ENCODE measurements at regions of chr1 and their contacts with region 1.

Region 1: DNA sequence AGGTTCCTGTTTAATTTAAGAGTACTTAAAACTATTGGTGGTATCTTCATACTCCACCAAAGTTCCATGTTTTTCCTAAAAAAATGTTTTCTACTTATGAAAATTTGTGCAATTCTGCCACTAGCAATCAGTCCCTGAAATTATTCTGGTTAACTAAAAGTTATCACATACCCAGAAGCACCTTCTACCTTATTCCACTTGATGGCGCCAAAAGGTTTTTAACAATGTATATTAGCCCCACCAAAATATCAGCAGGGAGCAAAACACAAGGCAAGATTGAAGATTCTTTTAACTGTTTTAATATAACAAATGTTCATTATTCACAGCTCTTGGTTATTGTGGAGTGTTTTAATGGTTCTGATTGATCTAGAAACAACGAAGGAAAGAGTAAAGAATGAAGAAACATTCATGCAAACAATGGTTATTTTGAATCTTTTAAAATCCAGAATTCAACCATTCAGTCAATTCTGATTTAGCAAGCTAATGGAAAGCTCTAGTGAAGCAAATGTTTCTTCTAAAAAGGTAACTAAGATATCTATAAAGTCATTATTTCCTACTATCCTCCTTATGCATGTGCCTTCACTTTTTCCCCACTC is 67.2 kb downstream of the TTLL7 start:
- DNase-seq: peak in 10 of 35 experiments; percentile 1 to 66 (median 14)
- ATAC-seq: peak; percentile 63 to 76 (median 76)
- H3K4me3 ChIP-seq: no peak overlapping the region
- H3K4me3 Mint-ChIP-seq: no peak overlapping the region
- H3K27ac ChIP-seq: no peak overlapping the region
- H3K27ac Mint-ChIP-seq: peak overlapping the region in 1 of 2 donors; percentile 69
- H3K4me1 ChIP-seq: no peaks in the 10 kb centered on the region
- H3K4me1 Mint-ChIP-seq: no peaks in the 10 kb centered on the region
- H3K27me3 ChIP-seq: no peaks in the 10 kb centered on the region
- H3K27me3 Mint-ChIP-seq: peaks cover 0 to 2% of the 10 kb centered on the region in 2 donors

Region 2: DNA sequence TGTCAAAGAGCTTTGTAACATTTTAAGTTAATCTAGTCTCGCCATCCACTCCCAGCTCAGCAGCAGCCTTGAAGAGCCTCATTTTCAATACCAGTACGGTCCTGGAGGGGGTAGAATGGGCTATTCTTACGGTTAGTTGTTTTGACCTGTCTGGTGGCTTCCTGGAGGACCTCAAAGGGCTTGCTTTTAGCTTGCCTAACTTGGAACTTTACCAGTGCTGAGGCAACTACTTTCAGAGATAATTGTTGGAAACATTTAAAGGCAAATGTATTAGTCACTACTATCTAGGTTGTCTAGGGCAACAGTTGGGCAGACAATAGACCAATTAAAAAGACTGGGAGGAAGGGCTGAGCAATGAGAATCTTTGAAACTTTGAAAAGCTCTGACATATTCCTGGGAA is 11.2 kb after region 1 on chr1:
- CTCF ChIA-PET with region 1: interaction called, 4 to 14 read pairs
- POLR2A ChIA-PET with region 1: no interaction called
- DNase-seq: no peak
- ATAC-seq: no peak
- H3K4me3 ChIP-seq: no peak overlapping the region
- H3K4me3 Mint-ChIP-seq: no peak overlapping the region
- H3K27ac ChIP-seq: no peak overlapping the region
- H3K27ac Mint-ChIP-seq: no peak overlapping the region
- H3K4me1 ChIP-seq: no peaks in the 10 kb centered on the region
- H3K4me1 Mint-ChIP-seq: no peaks in the 10 kb centered on the region
- H3K27me3 ChIP-seq: no peaks in the 10 kb centered on the region
- H3K27me3 Mint-ChIP-seq: peaks cover 4 to 5% of the 10 kb centered on the region in 2 donors

Region 3: DNA sequence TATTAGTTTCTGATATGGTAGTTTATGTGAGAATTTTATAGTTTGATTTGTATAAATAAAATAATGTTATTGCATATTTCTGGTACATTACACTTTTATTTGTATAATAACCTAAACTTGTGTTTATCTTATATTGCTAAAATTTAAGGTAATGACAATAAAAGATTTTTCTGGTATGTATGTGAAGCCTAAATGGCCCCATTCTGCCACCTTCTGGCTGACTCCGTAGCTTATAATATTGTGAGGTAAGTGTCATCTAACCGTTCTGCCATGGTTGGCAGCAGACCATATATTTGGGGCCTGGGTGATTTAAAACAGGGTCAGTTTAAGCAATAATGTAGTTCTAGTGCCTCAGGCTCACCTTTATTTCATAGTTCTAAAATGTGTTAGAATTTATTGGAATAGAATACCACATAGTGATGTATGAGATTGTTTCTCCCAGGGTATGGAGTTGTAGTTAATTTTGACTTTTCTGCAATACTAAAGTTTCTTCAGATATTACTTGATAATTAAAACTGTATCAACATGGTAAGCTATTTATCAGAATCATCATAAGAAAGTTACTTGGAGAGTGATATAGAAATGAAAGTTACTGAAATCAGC is 191.1 kb after region 1 on chr1:
- CTCF ChIA-PET with region 1: interaction called, 18 to 98 read pairs
- POLR2A ChIA-PET with region 1: interaction called in 1 of 2 experiments, 3 read pairs
- DNase-seq: peak in 32 of 35 experiments; percentile 5 to 73 (median 44)
- ATAC-seq: peak in 3 of 4 experiments; percentile 67 to 70 (median 69)
- H3K4me3 ChIP-seq: no peak overlapping the region
- H3K4me3 Mint-ChIP-seq: no peak overlapping the region
- H3K27ac ChIP-seq: no peak overlapping the region
- H3K27ac Mint-ChIP-seq: no peak overlapping the region
- H3K4me1 ChIP-seq: no peaks in the 10 kb centered on the region
- H3K4me1 Mint-ChIP-seq: no peaks in the 10 kb centered on the region
- H3K27me3 ChIP-seq: peaks cover 0 to 4% of the 10 kb centered on the region in 2 experiments
- H3K27me3 Mint-ChIP-seq: no peaks in the 10 kb centered on the region

Measured in T-cell (primary cell).